ENCODE measurements at regions of chr15 and their contacts with region 1.

Region 1: DNA sequence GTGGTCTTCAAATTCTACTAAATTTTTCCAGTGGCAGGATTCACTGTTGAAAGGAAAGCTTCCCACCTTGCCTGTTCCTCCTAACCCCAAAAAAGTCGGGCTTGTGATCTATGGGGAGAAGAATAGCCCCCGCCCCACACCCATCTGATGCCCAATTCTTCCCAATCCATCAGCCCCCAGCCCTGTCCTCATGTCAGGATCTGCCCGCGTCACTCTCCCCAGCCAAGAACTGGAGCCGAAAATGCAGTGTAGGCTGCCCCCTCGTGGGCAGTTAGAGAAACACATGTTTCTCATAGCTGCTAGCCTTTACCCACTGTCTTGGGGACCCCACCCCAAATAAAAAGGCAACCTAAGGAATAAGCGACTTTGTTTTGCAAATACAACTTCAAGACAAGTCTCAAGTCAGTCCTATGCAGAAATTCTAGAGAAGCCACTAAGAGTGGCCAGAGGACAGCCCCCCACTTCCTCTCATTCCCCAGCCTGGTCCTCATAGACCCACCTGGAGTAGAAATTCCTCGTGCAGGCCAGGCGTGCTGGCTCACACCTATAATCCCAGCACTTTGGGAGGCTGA is 13.0 kb upstream of the CSK start:
- DNase-seq: peak; percentile 71 to 93
- ATAC-seq: peak; percentile 60 to 73
- H3K4me3 ChIP-seq: peak overlapping the region; percentile 26; the same call in 2 of the 3 replicates
- H3K27ac ChIP-seq: peak overlapping the region; percentile 41 to 57; a peak in 4 of 6 replicates
- H3K4me1 ChIP-seq: peaks cover 7% of the 10 kb centered on the region; the same call in 2 of the 3 replicates
- CTCF ChIP-seq: peak; percentile 95
- EP300 ChIP-seq: no peak
- POLR2A ChIP-seq: no peak
- RAD21 ChIP-seq: peak; percentile 97

Region 2: DNA sequence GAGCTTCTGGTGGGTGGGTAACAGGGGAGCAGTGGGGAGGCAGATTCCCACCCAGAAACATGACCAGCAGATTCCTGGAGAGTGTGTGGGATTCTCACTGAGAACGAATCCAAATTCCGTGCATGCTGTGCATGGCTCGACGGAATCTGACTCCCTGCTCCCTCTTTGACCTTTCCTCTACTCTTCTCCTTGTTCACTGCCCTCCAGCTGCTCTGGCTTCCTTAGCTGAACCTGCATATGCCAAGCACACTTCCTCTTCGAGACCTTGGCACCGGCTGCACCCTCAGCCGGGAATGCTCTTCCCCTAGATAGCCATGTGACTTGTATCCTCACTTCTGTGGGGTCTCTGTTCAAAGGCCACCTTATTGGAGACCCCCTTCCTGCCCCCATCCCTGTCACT is 1022.0 kb before region 1 on chr15:
- CTCF ChIA-PET with region 1: no interaction called
- POLR2A ChIA-PET with region 1: no interaction called
- DNase-seq: no peak
- ATAC-seq: no peak
- H3K4me3 ChIP-seq: no peak overlapping the region
- H3K27ac ChIP-seq: no peak overlapping the region
- H3K4me1 ChIP-seq: peaks cover 10% of the 10 kb centered on the region
- CTCF ChIP-seq: no peak
- EP300 ChIP-seq: no peak
- POLR2A ChIP-seq: no peak
- RAD21 ChIP-seq: no peak

Region 3: GRCh38 chr15:74453925-74454763 is 314.7 kb before region 1 on chr15:
- CTCF ChIA-PET with region 1: no interaction called
- POLR2A ChIA-PET with region 1: no interaction called
- DNase-seq: no peak
- ATAC-seq: no peak
- H3K4me3 ChIP-seq: no peak overlapping the region
- H3K27ac ChIP-seq: no peak overlapping the region
- H3K4me1 ChIP-seq: no peaks in the 10 kb centered on the region
- CTCF ChIP-seq: no peak
- EP300 ChIP-seq: no peak
- POLR2A ChIP-seq: no peak
- RAD21 ChIP-seq: no peak

Region 4: DNA sequence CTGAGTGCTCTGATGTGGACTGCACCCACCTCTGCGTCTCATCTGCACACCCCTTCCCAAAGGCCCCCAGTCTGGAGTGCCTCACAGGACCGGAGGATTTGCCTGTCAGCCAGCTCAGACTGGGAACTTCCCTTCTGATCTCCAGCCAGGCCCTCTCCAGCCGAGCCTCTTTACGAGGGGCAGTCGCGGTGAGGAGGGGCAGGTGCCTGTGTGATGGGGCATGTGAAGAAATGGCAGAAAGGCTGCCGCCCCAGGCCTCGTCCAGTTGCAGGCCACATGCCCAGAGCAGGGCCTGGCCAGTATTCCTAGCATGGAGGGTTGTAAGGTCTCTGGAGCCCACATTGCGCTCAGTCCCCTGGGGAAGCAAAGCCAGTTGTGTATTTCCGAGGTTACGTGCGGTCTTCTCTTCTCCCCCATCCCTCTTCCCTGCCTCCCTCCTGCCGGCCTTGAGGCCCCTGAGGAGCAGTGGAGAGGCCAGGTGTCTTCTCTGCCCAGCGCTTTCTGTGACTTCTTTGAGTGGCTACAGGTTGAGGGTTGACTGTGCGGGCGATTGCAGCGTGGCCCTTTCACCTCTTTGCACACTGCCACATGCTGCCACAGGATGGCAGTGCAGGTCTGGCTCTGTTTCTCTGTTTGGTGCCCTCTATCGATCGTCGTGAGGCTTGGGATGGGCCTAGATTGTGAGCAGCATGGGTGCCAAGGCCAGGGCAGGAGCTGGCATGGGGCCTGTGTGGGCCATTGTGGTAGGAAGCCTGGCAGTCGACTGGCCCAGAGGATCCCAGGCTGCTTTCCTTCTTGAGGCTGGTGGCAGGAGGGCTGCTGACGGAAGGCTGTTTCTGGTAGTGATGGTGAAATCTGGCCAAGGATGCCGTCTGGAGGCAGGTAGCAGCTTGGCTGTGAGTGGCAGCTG is 148.0 kb before region 1 on chr15:
- CTCF ChIA-PET with region 1: interaction called, 701 read pairs
- POLR2A ChIA-PET with region 1: no interaction called
- DNase-seq: peak; percentile 80
- ATAC-seq: peak; percentile 81 to 91
- H3K4me3 ChIP-seq: no peak overlapping the region
- H3K27ac ChIP-seq: no peak overlapping the region
- H3K4me1 ChIP-seq: peaks cover 16% of the 10 kb centered on the region; the same call in 1 of the 3 replicates
- CTCF ChIP-seq: peak; percentile 87
- EP300 ChIP-seq: no peak
- POLR2A ChIP-seq: no peak
- RAD21 ChIP-seq: peak; percentile 42 to 60

Region 5: GRCh38 chr15:74653426-74654123 is 115.3 kb before region 1 on chr15:
- CTCF ChIA-PET with region 1: interaction called, 18 read pairs
- POLR2A ChIA-PET with region 1: no interaction called
- DNase-seq: no peak
- ATAC-seq: no peak
- H3K4me3 ChIP-seq: no peak overlapping the region
- H3K27ac ChIP-seq: no peak overlapping the region
- H3K4me1 ChIP-seq: peaks cover 6% of the 10 kb centered on the region; the same call in 1 of the 3 replicates
- CTCF ChIP-seq: no peak
- EP300 ChIP-seq: no peak
- POLR2A ChIP-seq: no peak
- RAD21 ChIP-seq: no peak

Region 6: GRCh38 chr15:74752491-74753020 is 16.3 kb before region 1 on chr15:
- CTCF ChIA-PET with region 1: interaction called, 102 read pairs
- POLR2A ChIA-PET with region 1: no interaction called
- DNase-seq: no peak
- ATAC-seq: peak in 1 of 2 experiments; percentile 51; a peak in 3 of 6 replicates
- H3K4me3 ChIP-seq: no peak overlapping the region
- H3K27ac ChIP-seq: no peak overlapping the region
- H3K4me1 ChIP-seq: no peaks in the 10 kb centered on the region
- CTCF ChIP-seq: no peak
- EP300 ChIP-seq: no peak
- POLR2A ChIP-seq: no peak
- RAD21 ChIP-seq: no peak

Region 7: DNA sequence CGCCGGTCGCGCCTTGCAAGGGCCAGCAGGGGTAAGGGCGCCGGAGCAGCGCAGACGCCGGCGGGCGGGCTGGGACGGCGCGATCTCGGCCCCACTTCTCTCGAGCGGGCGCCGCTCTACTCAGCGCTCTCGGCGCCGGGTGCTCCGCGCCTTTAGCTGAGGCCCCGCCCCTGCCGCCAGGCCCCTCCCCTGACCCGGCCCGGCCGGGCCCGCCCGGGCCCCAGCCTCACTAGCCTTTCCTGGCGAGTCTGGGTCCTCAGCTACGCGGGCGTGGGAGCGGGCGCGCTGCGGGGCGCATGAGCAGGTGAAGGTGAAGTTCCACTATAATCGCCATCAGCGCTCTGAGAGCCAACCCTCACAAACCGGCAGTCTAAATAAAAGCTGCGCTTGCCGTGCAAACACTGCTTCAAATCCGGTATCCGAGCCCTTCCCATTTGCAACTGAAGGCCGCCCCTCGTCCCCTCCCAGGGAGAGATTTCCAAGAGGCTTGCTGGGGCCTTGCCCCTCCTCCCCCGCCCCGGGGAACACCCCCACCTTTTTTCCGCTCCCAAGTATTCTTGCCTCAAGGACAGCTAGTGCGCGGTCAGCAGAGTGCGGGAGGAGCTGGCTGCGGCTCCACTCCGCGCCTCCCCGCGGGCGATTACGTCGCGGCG is 187.9 kb after region 1 on chr15 and contains the start of gene RPP25:
- CTCF ChIA-PET with region 1: interaction called, 107 read pairs
- POLR2A ChIA-PET with region 1: no interaction called
- DNase-seq: peak; percentile 86 to 94
- ATAC-seq: peak; percentile 87 to 93
- H3K4me3 ChIP-seq: peak within 1 kb of the TSS; percentile 53
- H3K27ac ChIP-seq: peak within 1 kb of the TSS; percentile 82 to 92
- H3K4me1 ChIP-seq: peaks cover 44% of the 10 kb centered on the region
- CTCF ChIP-seq: no peak
- EP300 ChIP-seq: no peak
- POLR2A ChIP-seq: peak; percentile 95
- RAD21 ChIP-seq: 0 out of 5 replicates have a peak, but pooled peaks have one; percentile 2 to 9
- polyA plus RNA-seq, gene RPP25: 8.8 and 9.3 TPM in 2 replicates